Caco-2 (cell line): ENCODE measurements at regions of chr19 and their contacts with region 1.

Region 1: DNA sequence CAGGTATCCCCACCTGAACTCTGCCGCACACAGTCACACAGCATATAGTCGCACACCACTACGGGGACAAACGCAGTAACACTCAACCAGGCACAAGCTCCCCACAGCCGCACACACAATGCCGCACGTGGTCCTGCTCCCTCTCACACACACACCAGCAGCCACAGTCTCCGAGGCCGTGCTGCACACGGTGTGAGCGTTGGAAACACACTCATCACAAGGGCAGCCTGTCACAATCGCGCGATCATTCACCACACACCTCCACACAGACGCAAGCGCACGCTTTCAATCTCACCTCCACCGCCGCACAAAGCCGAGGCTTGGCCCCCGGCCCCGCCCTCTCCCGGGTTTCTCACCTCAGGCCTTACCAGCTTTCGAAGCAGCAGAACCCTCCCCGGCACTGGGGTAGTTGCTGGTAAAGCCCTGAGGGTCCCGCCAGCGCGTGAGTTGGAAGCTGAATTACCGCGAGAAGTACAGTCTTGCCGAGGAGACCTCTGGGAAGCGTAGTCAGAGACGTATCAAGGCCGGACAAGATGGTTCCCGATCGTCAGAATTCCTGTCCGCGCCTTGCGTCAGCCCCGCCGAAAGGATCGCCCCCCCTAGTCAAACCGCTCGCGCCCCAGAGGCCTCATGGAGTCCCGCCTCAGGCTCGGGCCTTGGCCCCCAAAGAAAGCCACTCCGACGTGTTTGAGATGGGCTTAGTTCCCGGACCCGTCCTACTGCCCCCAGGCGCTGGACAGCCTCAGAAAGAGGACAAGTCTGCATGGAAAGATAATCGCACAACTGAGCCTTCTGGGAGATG is at the start of gene ZNF566:
- DNase-seq: peak; percentile 97 to 99
- H3K4me3 ChIP-seq: peak within 1 kb of the TSS; percentile 93
- H3K4me3 Mint-ChIP-seq: peak within 1 kb of the TSS; percentile 91
- H3K27ac Mint-ChIP-seq: peak within 1 kb of the TSS; percentile 99
- H3K4me1 ChIP-seq: no peaks in the 10 kb centered on the region
- H3K4me1 Mint-ChIP-seq: peaks cover 14% of the 10 kb centered on the region
- H3K27me3 ChIP-seq: no peaks in the 10 kb centered on the region
- H3K27me3 Mint-ChIP-seq: no peaks in the 10 kb centered on the region
- CTCF ChIP-seq: no peak
- total RNA-seq, gene ZNF566: 10.0 and 11.6 TPM in 2 replicates

Region 2: DNA sequence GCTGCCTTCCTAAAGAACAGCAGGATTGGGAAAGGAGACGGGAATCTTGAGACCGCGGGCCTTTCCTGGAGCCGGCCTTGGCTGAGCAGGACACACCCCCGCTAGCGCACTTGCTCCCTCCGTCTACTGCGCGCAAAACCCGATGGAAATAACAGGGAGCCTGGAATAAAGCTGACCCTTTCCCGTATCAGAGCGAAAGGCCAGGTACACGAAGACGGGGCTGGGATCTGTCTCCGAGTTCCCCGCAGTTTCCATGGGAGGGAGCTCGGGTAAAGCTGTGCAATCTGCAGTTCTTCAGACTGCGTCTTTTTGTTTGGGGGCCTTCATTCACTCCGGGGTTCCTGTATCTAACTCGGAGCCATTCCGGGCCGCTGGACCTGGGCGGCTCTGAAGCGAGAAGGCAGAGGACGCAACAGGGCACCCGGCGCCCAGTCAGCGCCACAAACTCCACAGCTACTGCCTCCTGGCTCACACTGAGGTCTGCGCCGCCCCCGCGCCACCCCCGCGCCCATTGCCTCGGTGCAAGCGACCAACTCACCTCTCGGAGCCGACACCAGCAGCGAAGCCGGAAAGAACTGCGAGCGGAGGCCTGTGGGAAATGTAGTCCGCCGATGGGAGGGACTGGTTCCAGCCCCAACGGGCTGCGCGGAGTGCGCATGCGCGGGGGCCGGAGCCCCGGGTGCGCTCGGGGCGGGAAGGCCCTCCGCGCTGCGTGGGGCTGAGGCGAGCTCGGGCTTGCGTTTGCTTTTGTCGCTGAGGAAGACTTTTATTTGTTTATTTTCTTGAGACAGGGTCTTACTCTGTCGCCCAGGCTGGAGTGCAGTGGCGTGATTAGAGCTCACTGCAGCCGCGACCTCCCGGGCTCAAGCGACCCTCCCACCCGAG is 110.5 kb before region 1 on chr19 and contains the start of gene ZFP14:
- CTCF ChIA-PET with region 1: interaction called, 3 read pairs
- POLR2A ChIA-PET with region 1: interaction called, 7 read pairs
- intact Hi-C with region 1: loop called (anchors 1 kb)
- DNase-seq: peak; percentile 96 to 97
- H3K4me3 ChIP-seq: peak within 1 kb of the TSS; percentile 94
- H3K4me3 Mint-ChIP-seq: peak within 1 kb of the TSS; percentile 94
- H3K27ac Mint-ChIP-seq: peak within 1 kb of the TSS; percentile 93
- H3K4me1 ChIP-seq: peaks cover 5% of the 10 kb centered on the region
- H3K4me1 Mint-ChIP-seq: peaks cover 8% of the 10 kb centered on the region
- H3K27me3 ChIP-seq: no peaks in the 10 kb centered on the region
- H3K27me3 Mint-ChIP-seq: no peaks in the 10 kb centered on the region
- CTCF ChIP-seq: peak in 1 of 2 experiments; percentile 35
- total RNA-seq, gene ZFP14: 3.5 and 4.0 TPM in 2 replicates

Region 3: GRCh38 chr19:36449059-36449670 is 40.2 kb before region 1 on chr19:
- CTCF ChIA-PET with region 1: no interaction called
- POLR2A ChIA-PET with region 1: no interaction called
- intact Hi-C with region 1: no loop called
- DNase-seq: no peak
- H3K4me3 ChIP-seq: no peak overlapping the region
- H3K4me3 Mint-ChIP-seq: no peak overlapping the region
- H3K27ac Mint-ChIP-seq: no peak overlapping the region
- H3K4me1 ChIP-seq: no peaks in the 10 kb centered on the region
- H3K4me1 Mint-ChIP-seq: no peaks in the 10 kb centered on the region
- H3K27me3 ChIP-seq: no peaks in the 10 kb centered on the region
- H3K27me3 Mint-ChIP-seq: no peaks in the 10 kb centered on the region
- CTCF ChIP-seq: no peak

Region 4: DNA sequence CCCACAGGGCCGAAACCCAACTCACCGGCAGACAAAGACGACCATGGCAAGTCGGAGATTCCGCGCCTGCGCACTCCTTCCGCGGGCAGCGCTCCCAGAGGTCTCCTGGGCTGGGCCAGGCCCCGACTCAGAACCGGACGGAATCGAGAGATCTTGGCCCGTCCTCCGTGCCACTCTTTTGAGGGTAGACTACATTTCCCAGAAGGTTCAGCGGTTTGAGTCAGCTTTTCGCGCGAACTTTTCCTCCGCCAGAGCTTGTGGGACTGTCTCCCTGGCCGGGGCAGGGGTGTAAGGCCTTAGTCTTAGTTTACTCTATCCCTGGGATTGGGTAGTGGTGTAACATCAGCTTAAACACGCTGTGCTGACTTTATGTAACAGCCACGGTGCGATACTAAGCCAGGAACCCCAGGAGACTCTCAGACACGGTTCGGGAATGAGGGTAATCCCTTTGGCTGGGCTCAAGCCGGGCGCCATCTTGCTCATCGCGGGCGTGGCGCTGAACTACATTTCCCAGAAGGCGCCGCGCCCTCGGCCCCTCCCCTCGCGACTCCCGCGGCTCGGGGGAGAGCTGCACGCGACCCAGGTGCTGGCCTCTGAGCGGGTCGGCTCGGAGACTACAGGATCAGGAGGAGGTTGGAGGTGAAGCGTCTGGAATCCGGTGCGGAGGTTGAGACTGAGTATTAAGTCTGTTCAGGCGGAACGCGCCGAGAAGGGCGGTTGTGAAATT is 39.0 kb after region 1 on chr19 and contains the start of gene ZNF260:
- CTCF ChIA-PET with region 1: interaction called, 7 read pairs
- POLR2A ChIA-PET with region 1: interaction called, 34 read pairs
- intact Hi-C with region 1: loop called (anchors 1 kb)
- DNase-seq: peak; percentile 96 to 97
- H3K4me3 ChIP-seq: peak within 1 kb of the TSS; percentile 92
- H3K4me3 Mint-ChIP-seq: peak within 1 kb of the TSS; percentile 100
- H3K27ac Mint-ChIP-seq: peak within 1 kb of the TSS; percentile 99
- H3K4me1 ChIP-seq: no peaks in the 10 kb centered on the region
- H3K4me1 Mint-ChIP-seq: peaks cover 6% of the 10 kb centered on the region
- H3K27me3 ChIP-seq: no peaks in the 10 kb centered on the region
- H3K27me3 Mint-ChIP-seq: no peaks in the 10 kb centered on the region
- CTCF ChIP-seq: no peak
- total RNA-seq, gene ZNF260: 12.5 and 13.2 TPM in 2 replicates

Region 5: GRCh38 chr19:36564391-36564790 is 75.1 kb after region 1 on chr19:
- CTCF ChIA-PET with region 1: no interaction called
- POLR2A ChIA-PET with region 1: no interaction called
- intact Hi-C with region 1: no loop called
- DNase-seq: no peak
- H3K4me3 ChIP-seq: no peak overlapping the region
- H3K4me3 Mint-ChIP-seq: no peak overlapping the region
- H3K27ac Mint-ChIP-seq: no peak overlapping the region
- H3K4me1 ChIP-seq: no peaks in the 10 kb centered on the region
- H3K4me1 Mint-ChIP-seq: no peaks in the 10 kb centered on the region
- H3K27me3 ChIP-seq: no peaks in the 10 kb centered on the region
- H3K27me3 Mint-ChIP-seq: no peaks in the 10 kb centered on the region
- CTCF ChIP-seq: no peak

Region 6: GRCh38 chr19:36665832-36666231 is 176.5 kb after region 1 on chr19:
- CTCF ChIA-PET with region 1: no interaction called
- POLR2A ChIA-PET with region 1: interaction called, 5 read pairs
- intact Hi-C with region 1: loop called (anchors 2 kb)
- DNase-seq: no peak
- H3K4me3 ChIP-seq: peak overlapping the region; percentile 50
- H3K4me3 Mint-ChIP-seq: peak overlapping the region; percentile 98
- H3K27ac Mint-ChIP-seq: peak overlapping the region; percentile 91
- H3K4me1 ChIP-seq: no peaks in the 10 kb centered on the region
- H3K4me1 Mint-ChIP-seq: peaks cover 7% of the 10 kb centered on the region
- H3K27me3 ChIP-seq: no peaks in the 10 kb centered on the region
- H3K27me3 Mint-ChIP-seq: no peaks in the 10 kb centered on the region
- CTCF ChIP-seq: no peak